ENCODE measurements at regions of chr2 and their contacts with region 1.

Region 1: GRCh38 chr2:98487806-98488651 is 43.4 kb downstream of the INPP4A start:
- DNase-seq: peak; percentile 62
- H3K4me3 Mint-ChIP-seq: no peak overlapping the region
- H3K27ac Mint-ChIP-seq: no peak overlapping the region
- H3K4me1 Mint-ChIP-seq: peaks cover 87% of the 10 kb centered on the region
- H3K27me3 Mint-ChIP-seq: no peaks in the 10 kb centered on the region

Region 2: GRCh38 chr2:97997806-97998392 is 490.1 kb before region 1 on chr2:
- CTCF ChIA-PET with region 1: no interaction called
- POLR2A ChIA-PET with region 1: no interaction called
- intact Hi-C with region 1: no loop called
- DNase-seq: no peak
- H3K4me3 Mint-ChIP-seq: no peak overlapping the region
- H3K27ac Mint-ChIP-seq: no peak overlapping the region
- H3K4me1 Mint-ChIP-seq: peaks cover 17% of the 10 kb centered on the region
- H3K27me3 Mint-ChIP-seq: no peaks in the 10 kb centered on the region

Region 3: DNA sequence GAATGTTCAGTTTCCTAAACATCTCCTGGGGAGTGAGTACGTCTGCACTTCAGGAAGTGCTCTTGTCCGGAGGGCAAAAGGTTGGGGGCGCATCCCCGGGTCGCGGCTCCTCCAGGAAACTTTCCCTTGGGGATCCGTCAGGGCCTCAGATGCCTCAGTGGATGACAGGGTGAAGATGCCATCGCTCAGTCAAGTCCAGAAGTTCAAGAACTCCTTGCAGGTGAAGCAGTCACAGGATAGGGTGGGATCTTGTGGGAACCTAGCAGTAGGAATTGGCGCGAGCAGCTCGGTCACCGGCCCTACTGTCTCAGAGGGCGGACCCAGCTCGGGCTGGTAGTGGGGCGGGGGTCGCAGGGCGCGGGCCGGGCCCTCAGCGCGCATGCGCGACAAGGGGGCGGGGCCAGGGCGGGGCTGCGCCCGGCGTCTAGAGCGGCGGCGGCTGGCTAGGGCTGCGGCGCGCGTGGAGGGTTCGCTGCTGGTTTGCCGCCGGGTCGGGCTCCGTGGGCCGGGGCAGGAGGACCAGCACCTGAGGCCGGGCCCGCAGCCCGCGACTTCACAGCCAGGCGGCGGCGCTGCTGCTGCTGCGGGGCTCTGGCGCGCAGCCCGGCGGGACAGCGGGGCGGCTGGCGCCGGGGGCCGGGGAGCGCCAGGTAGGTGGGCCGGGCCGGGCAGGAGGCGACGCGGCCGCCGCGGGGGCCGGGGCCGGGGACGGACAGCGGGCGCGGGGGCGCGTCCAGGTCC is 43.4 kb before region 1 on chr2 and contains the start of gene INPP4A:
- CTCF ChIA-PET with region 1: interaction called, 8 read pairs
- POLR2A ChIA-PET with region 1: no interaction called
- intact Hi-C with region 1: loop called (anchors 1 kb)
- DNase-seq: peak; percentile 84
- H3K4me3 Mint-ChIP-seq: peak within 1 kb of the TSS; percentile 89
- H3K27ac Mint-ChIP-seq: peak within 1 kb of the TSS; percentile 86
- H3K4me1 Mint-ChIP-seq: peaks cover 43% of the 10 kb centered on the region
- H3K27me3 Mint-ChIP-seq: no peaks in the 10 kb centered on the region
- total RNA-seq, gene INPP4A: 40.7 to 42.0 TPM

Region 4: GRCh38 chr2:98505311-98505808 is 17.3 kb after region 1 on chr2:
- CTCF ChIA-PET with region 1: interaction called, 29 read pairs
- POLR2A ChIA-PET with region 1: no interaction called
- intact Hi-C with region 1: no loop called
- DNase-seq: peak; percentile 54
- H3K4me3 Mint-ChIP-seq: no peak overlapping the region
- H3K27ac Mint-ChIP-seq: no peak overlapping the region
- H3K4me1 Mint-ChIP-seq: peaks cover 89% of the 10 kb centered on the region
- H3K27me3 Mint-ChIP-seq: no peaks in the 10 kb centered on the region

Region 5: GRCh38 chr2:98518090-98518489 is 30.1 kb after region 1 on chr2:
- CTCF ChIA-PET with region 1: interaction called, 13 read pairs
- POLR2A ChIA-PET with region 1: interaction called, 3 read pairs
- intact Hi-C with region 1: no loop called
- DNase-seq: peak; percentile 72
- H3K4me3 Mint-ChIP-seq: no peak overlapping the region
- H3K27ac Mint-ChIP-seq: no peak overlapping the region
- H3K4me1 Mint-ChIP-seq: peaks cover 44% of the 10 kb centered on the region
- H3K27me3 Mint-ChIP-seq: no peaks in the 10 kb centered on the region

Region 6: GRCh38 chr2:98541906-98542305 is 53.9 kb after region 1 on chr2:
- CTCF ChIA-PET with region 1: no interaction called
- POLR2A ChIA-PET with region 1: no interaction called
- intact Hi-C with region 1: no loop called
- DNase-seq: peak; percentile 30
- H3K4me3 Mint-ChIP-seq: no peak overlapping the region
- H3K27ac Mint-ChIP-seq: peak overlapping the region; percentile 39
- H3K4me1 Mint-ChIP-seq: peaks cover 29% of the 10 kb centered on the region
- H3K27me3 Mint-ChIP-seq: no peaks in the 10 kb centered on the region

Region 7: GRCh38 chr2:98757904-98758421 is 269.9 kb after region 1 on chr2:
- CTCF ChIA-PET with region 1: no interaction called
- POLR2A ChIA-PET with region 1: no interaction called
- intact Hi-C with region 1: no loop called
- DNase-seq: peak; percentile 69
- H3K4me3 Mint-ChIP-seq: peak overlapping the region; percentile 51
- H3K27ac Mint-ChIP-seq: peak overlapping the region; percentile 86
- H3K4me1 Mint-ChIP-seq: peaks cover 51% of the 10 kb centered on the region
- H3K27me3 Mint-ChIP-seq: no peaks in the 10 kb centered on the region

Measured in activated CD4-positive, alpha-beta memory T cell treated with anti-CD3 and anti-CD28 coated beads for 36 hours (primary cell).